ENCODE measurements at regions of chr6 and their contacts with region 1.

Region 1: GRCh38 chr6:131923356-131923755 is 27.8 kb downstream of the CCN2 start:
- DNase-seq: peak; percentile 22
- H3K4me3 ChIP-seq: no peak overlapping the region
- H3K27ac ChIP-seq: no peak overlapping the region
- H3K4me1 ChIP-seq: no peaks in the 10 kb centered on the region
- H3K27me3 ChIP-seq: peaks cover 3% of the 10 kb centered on the region
- CTCF ChIP-seq: peak; percentile 72

Region 2: DNA sequence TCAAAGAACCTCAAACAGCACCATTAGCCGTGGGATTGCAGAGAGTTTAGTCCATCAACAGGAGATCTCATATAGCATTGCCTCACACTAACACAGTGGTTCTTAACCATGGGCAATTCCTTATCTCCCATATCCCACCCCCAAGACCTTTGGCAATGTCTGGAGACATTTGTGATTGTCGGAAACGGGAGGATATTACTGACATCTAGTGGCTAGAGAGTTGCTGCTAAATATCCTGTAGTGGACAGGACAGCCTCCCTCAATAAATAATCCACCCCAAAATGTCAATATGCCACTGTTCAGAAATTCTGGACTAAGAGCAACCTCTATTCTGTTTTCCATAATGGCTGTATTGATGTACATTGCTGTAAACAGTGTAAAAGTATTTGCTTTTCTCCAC is 237.9 kb after region 1 on chr6:
- intact Hi-C with region 1: loop called (anchors 10 kb)
- DNase-seq: no peak
- H3K4me3 ChIP-seq: no peak overlapping the region
- H3K27ac ChIP-seq: no peak overlapping the region
- H3K4me1 ChIP-seq: no peaks in the 10 kb centered on the region
- H3K27me3 ChIP-seq: no peaks in the 10 kb centered on the region
- CTCF ChIP-seq: peak; percentile 79

Region 3: GRCh38 chr6:132369526-132369925 is 446.2 kb after region 1 on chr6:
- intact Hi-C with region 1: no loop called
- DNase-seq: no peak
- H3K4me3 ChIP-seq: peak overlapping the region; percentile 14
- H3K27ac ChIP-seq: peak overlapping the region; percentile 9
- H3K4me1 ChIP-seq: no peaks in the 10 kb centered on the region
- H3K27me3 ChIP-seq: no peaks in the 10 kb centered on the region
- CTCF ChIP-seq: no peak

Measured in left ventricle myocardium inferior (tissue), 1 donor.